ENCODE measurements at regions of chr6 and their contacts with region 1.

Region 1: GRCh38 chr6:227074-227782 is 65.1 kb upstream of the DUSP22 start:
- DNase-seq: no peak
- ATAC-seq: peak; percentile 90
- H3K4me3 Mint-ChIP-seq: peak overlapping the region; percentile 55
- H3K27ac Mint-ChIP-seq: peak overlapping the region; percentile 80
- H3K4me1 Mint-ChIP-seq: peaks cover 67% of the 10 kb centered on the region
- H3K27me3 Mint-ChIP-seq: no peaks in the 10 kb centered on the region
- CTCF ChIP-seq: no peak

Region 2: GRCh38 chr6:286681-287488 is 59.7 kb after region 1 on chr6:
- CTCF ChIA-PET with region 1: interaction called, 10 read pairs
- POLR2A ChIA-PET with region 1: interaction called, 44 read pairs
- intact Hi-C with region 1: loop called (anchors 1 kb)
- DNase-seq: peak; percentile 54
- ATAC-seq: peak; percentile 47
- H3K4me3 Mint-ChIP-seq: peak overlapping the region; percentile 76
- H3K27ac Mint-ChIP-seq: peak overlapping the region; percentile 93
- H3K4me1 Mint-ChIP-seq: peaks cover 65% of the 10 kb centered on the region
- H3K27me3 Mint-ChIP-seq: no peaks in the 10 kb centered on the region
- CTCF ChIP-seq: no peak

Region 3: DNA sequence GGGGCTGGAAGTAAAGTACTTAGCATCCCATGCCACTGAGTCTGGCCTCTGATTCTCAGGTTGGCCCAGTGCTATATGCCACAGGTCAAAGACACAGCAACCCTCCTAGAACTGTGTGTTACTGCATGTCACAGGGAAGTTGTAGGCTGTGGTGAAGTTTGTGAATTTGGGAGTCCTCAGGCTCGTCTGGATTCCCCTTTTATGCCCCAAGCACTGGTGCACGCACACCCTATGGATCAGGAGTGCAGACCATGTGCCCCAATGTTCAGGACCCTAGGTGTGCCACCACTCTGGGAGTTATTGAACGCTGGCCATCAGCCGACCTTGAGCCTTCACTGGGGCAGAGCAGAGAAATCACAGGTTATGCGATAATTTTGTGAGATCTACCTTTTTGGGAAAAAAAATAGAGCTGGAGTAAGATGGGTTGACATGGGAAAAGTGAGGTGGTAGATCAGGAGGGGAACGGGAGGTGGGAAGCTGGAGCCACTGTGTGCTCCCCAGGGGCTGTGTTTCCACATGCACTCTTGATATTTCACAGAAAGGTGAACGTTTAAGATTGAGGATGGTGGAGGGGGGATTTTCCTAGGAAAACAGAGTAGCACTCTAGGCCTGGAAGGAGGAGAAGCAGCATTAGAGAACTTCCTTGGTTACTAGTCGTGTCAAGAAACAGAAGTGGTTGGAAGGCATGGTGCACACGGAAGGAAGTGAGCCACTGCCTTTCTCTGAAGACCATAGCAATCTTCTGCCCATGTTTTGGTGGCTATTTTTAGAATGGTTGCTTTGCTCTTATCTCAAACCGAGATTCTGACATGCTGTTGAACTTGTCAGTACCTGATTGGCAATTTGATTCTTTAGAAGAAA is 109.2 kb after region 1 on chr6:
- CTCF ChIA-PET with region 1: interaction called, 5 read pairs
- POLR2A ChIA-PET with region 1: interaction called, 3 read pairs
- intact Hi-C with region 1: loop called (anchors 2 kb)
- DNase-seq: no peak
- ATAC-seq: peak; percentile 57
- H3K4me3 Mint-ChIP-seq: peak overlapping the region; percentile 62
- H3K27ac Mint-ChIP-seq: peak overlapping the region; percentile 78
- H3K4me1 Mint-ChIP-seq: peaks cover 75% of the 10 kb centered on the region
- H3K27me3 Mint-ChIP-seq: no peaks in the 10 kb centered on the region
- CTCF ChIP-seq: no peak

Region 4: DNA sequence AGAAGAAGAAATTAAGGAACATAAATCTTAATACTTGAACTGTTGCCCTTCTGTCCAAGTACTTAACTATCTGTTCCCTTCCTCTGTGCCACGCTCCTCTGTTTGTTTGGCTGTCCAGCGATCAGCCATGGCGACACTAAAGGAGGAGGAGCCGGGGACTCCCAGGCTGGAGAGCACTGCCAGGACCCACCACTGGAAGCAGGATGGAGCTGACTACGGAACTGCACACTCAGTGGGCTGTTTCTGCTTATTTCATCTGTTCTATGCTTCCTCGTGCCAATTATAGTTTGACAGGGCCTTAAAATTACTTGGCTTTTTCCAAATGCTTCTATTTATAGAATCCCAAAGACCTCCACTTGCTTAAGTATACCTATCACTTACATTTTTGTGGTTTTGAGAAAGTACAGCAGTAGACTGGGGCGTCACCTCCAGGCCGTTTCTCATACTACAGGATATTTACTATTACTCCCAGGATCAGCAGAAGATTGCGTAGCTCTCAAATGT is 181.4 kb after region 1 on chr6:
- CTCF ChIA-PET with region 1: interaction called, 13 read pairs
- POLR2A ChIA-PET with region 1: interaction called, 32 read pairs
- intact Hi-C with region 1: loop called (anchors 1 kb)
- DNase-seq: no peak
- ATAC-seq: no peak
- H3K4me3 Mint-ChIP-seq: peak overlapping the region; percentile 15
- H3K27ac Mint-ChIP-seq: peak overlapping the region; percentile 60
- H3K4me1 Mint-ChIP-seq: peaks cover 56% of the 10 kb centered on the region
- H3K27me3 Mint-ChIP-seq: no peaks in the 10 kb centered on the region
- CTCF ChIP-seq: no peak

Region 5: GRCh38 chr6:551405-551804 is 324.2 kb after region 1 on chr6:
- CTCF ChIA-PET with region 1: interaction called, 7 read pairs
- POLR2A ChIA-PET with region 1: no interaction called
- intact Hi-C with region 1: loop called (anchors 1 kb)
- DNase-seq: no peak
- ATAC-seq: peak; percentile 57
- H3K4me3 Mint-ChIP-seq: no peak overlapping the region
- H3K27ac Mint-ChIP-seq: no peak overlapping the region
- H3K4me1 Mint-ChIP-seq: no peaks in the 10 kb centered on the region
- H3K27me3 Mint-ChIP-seq: no peaks in the 10 kb centered on the region
- CTCF ChIP-seq: no peak

Region 6: GRCh38 chr6:1396952-1397868 is 1170.0 kb after region 1 on chr6:
- CTCF ChIA-PET with region 1: interaction called, 8 read pairs
- POLR2A ChIA-PET with region 1: no interaction called
- intact Hi-C with region 1: loop called (anchors 2 kb)
- DNase-seq: peak; percentile 67
- ATAC-seq: peak; percentile 58
- H3K4me3 Mint-ChIP-seq: no peak overlapping the region
- H3K27ac Mint-ChIP-seq: no peak overlapping the region
- H3K4me1 Mint-ChIP-seq: peaks cover 8% of the 10 kb centered on the region
- H3K27me3 Mint-ChIP-seq: peaks cover 48% of the 10 kb centered on the region
- CTCF ChIP-seq: peak; percentile 90

Measured in activated B cell treated with CpG ODN at 0.5 μM for 24 hours (primary cell).